A549 (cell line): ENCODE measurements at regions of chr10 and their contacts with region 1.

Region 1: GRCh38 chr10:125060826-125061556 is 99.4 kb downstream of the CTBP2 start:
- DNase-seq: peak; percentile 64
- ATAC-seq: peak; percentile 91
- H3K4me3 ChIP-seq: no peak overlapping the region
- H3K27ac ChIP-seq: peak overlapping the region; percentile 26 to 73; a peak in 4 of 6 replicates
- H3K4me1 ChIP-seq: peaks cover 25% of the 10 kb centered on the region
- CTCF ChIP-seq: peak; percentile 70
- EP300 ChIP-seq: no peak
- POLR2A ChIP-seq: no peak
- RAD21 ChIP-seq: peak; percentile 63 to 64

Region 2: DNA sequence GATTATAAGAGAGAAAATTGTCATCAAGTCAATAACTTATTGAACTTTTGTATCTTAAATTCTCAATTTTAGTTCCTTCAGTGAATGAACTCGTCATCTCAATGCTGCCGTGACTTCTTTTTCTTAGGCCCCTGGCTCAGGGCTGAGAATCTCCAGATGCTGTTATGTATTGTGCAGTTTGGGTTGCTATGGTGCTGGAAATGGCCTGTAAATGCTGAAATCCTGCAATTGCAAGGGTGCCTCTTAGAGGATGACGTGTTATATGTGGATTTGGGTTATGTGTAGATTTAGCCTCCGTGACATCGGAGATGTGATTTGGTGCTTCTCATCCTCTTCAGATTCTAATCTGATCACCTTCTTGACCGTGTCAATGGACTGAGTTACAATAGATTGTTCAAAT is 174.8 kb before region 1 on chr10:
- CTCF ChIA-PET with region 1: no interaction called
- POLR2A ChIA-PET with region 1: no interaction called
- DNase-seq: no peak
- ATAC-seq: peak in 1 of 2 experiments; percentile 62; a peak in 1 of 6 replicates
- H3K4me3 ChIP-seq: no peak overlapping the region
- H3K27ac ChIP-seq: no peak overlapping the region
- H3K4me1 ChIP-seq: no peaks in the 10 kb centered on the region
- CTCF ChIP-seq: no peak
- EP300 ChIP-seq: no peak
- POLR2A ChIP-seq: no peak
- RAD21 ChIP-seq: no peak

Region 3: GRCh38 chr10:124992462-124993344 is 68.3 kb before region 1 on chr10:
- CTCF ChIA-PET with region 1: interaction called, 17 read pairs
- POLR2A ChIA-PET with region 1: no interaction called
- DNase-seq: peak in 1 of 2 experiments; percentile 70
- ATAC-seq: peak; percentile 45 to 82; a peak in 3 of 6 replicates
- H3K4me3 ChIP-seq: no peak overlapping the region
- H3K27ac ChIP-seq: no peak overlapping the region
- H3K4me1 ChIP-seq: no peaks in the 10 kb centered on the region
- CTCF ChIP-seq: peak; percentile 57
- EP300 ChIP-seq: no peak
- POLR2A ChIP-seq: no peak
- RAD21 ChIP-seq: peak; percentile 57 to 58

Region 4: DNA sequence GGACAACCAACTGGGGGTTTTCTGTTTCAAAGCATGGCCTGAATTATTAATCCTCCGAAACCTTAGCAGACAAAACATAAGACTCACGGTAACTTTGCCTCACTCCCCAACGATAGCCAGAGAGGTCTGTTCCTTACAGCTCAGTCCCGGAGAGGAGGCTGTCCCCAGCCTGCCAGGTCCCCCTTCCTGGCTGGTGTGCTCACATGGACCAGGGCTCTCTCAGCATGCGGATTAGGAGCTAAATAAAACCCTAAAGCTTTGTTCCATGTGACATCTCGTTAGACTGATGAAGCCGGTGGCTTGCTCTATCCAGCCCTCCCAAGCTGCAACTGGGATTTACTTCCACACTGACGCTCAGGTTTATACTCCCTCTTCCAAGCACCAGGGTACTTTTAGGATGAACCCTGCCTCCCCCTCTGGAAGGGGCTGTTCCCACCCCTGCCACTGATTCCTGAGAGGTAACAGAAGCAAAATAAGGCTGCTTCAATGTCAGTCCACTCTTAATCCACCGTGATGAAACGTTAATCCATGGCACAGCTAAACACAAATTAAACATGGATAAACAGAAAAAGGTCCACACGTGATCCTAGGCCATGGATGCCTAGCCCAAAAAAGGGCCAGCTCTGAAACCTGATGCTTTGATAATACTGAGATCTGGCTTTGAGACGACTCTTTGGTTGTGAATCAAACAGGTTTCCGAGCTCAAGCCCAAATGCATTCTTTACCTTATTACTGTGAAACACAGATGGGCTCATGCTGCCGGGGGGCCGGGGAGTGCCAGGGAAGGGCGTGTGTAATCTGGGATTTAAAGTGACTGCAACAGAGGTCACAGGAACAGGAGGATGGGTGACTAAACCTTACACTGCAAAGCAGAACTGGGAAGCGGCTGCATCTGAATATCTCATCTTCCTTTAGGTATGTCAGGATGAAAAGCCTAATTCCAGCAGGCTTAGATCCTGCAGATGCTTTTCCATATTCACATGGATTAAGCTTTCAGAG is 32.8 kb before region 1 on chr10:
- CTCF ChIA-PET with region 1: interaction called, 11 read pairs
- POLR2A ChIA-PET with region 1: no interaction called
- DNase-seq: no peak
- ATAC-seq: no peak
- H3K4me3 ChIP-seq: no peak overlapping the region
- H3K27ac ChIP-seq: no peak overlapping the region
- H3K4me1 ChIP-seq: peaks cover 13% of the 10 kb centered on the region
- CTCF ChIP-seq: no peak
- EP300 ChIP-seq: no peak
- POLR2A ChIP-seq: no peak
- RAD21 ChIP-seq: no peak

Region 5: GRCh38 chr10:125076891-125077541 is 16.0 kb after region 1 on chr10:
- CTCF ChIA-PET with region 1: interaction called, 50 read pairs
- POLR2A ChIA-PET with region 1: no interaction called
- DNase-seq: no peak
- ATAC-seq: no peak
- H3K4me3 ChIP-seq: no peak overlapping the region
- H3K27ac ChIP-seq: no peak overlapping the region
- H3K4me1 ChIP-seq: peaks cover 10% of the 10 kb centered on the region; the same call in 2 of the 3 replicates
- CTCF ChIP-seq: no peak
- EP300 ChIP-seq: no peak
- POLR2A ChIP-seq: no peak
- RAD21 ChIP-seq: no peak

Region 6: GRCh38 chr10:125091891-125092290 is 30.9 kb after region 1 on chr10:
- CTCF ChIA-PET with region 1: interaction called, 10 read pairs
- POLR2A ChIA-PET with region 1: no interaction called
- DNase-seq: no peak
- ATAC-seq: no peak
- H3K4me3 ChIP-seq: no peak overlapping the region
- H3K27ac ChIP-seq: no peak overlapping the region
- H3K4me1 ChIP-seq: peaks cover 24% of the 10 kb centered on the region
- CTCF ChIP-seq: no peak
- EP300 ChIP-seq: no peak
- POLR2A ChIP-seq: no peak
- RAD21 ChIP-seq: no peak

Region 7: GRCh38 chr10:125102231-125102630 is 41.2 kb after region 1 on chr10:
- CTCF ChIA-PET with region 1: no interaction called
- POLR2A ChIA-PET with region 1: no interaction called
- DNase-seq: peak in 1 of 2 experiments; percentile 61
- ATAC-seq: peak; percentile 58 to 71
- H3K4me3 ChIP-seq: no peak overlapping the region
- H3K27ac ChIP-seq: peak overlapping the region; percentile 47 to 75; a peak in 5 of 6 replicates
- H3K4me1 ChIP-seq: peaks cover 24% of the 10 kb centered on the region
- CTCF ChIP-seq: no peak
- EP300 ChIP-seq: no peak
- POLR2A ChIP-seq: no peak
- RAD21 ChIP-seq: no peak

Region 8: DNA sequence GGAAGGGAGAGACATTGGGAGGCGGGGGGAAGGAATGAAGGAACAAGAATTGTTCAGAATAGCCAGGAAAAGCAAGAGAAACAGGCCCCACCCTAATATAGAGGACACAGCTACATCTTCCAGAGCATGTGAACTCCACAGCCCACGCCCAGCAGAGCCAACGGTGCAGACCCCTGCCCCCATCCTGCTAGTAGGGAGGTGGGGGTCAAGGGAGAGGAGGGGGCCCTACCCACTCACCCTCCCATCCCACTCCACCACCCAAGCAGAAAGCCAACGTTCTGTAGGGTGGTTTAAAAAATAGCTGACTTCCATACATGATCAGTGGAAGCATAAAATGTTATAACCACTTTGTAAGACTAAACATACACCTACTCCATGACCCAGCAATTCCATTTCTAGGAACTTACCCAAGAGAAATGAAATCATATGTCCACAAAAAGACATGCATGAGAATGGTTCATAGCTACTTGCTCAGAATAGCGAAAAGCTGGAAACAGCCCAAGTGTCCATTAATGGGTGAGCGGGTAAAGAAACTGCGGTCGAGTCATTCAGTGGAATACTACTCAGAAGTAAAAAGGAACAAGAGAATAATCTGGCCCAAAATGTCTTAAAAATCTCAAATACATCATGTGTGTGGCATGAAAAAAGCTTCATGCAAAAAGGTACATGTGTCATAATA is 67.5 kb after region 1 on chr10:
- CTCF ChIA-PET with region 1: interaction called, 10 read pairs
- POLR2A ChIA-PET with region 1: no interaction called
- DNase-seq: no peak
- ATAC-seq: no peak
- H3K4me3 ChIP-seq: no peak overlapping the region
- H3K27ac ChIP-seq: peak overlapping the region in 1 of 2 experiments; percentile 10; a peak in 2 of 6 replicates
- H3K4me1 ChIP-seq: peaks cover 47% of the 10 kb centered on the region
- CTCF ChIP-seq: no peak
- EP300 ChIP-seq: no peak
- POLR2A ChIP-seq: no peak
- RAD21 ChIP-seq: no peak

Region 9: DNA sequence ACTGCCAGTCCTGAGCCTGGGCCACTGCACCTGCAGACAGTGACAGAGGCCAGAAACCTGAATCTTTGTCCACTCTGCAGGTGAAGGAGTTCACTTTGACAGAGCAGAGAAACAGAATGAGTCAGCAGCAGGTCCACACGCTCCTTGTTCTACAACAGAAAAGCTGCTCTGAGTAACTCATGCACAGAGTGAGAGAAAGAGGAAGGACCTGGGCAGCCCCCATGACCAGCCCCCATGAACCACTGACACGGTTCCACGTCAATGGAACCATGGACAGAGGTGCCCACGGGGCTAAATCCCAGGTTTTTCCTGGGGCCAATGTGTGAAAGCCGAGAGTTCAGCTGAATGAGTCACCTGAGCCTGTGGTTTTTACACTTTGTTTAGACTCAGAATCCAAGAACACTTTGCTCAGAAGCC is 140.1 kb after region 1 on chr10:
- CTCF ChIA-PET with region 1: no interaction called
- POLR2A ChIA-PET with region 1: no interaction called
- DNase-seq: peak; percentile 19 to 25
- ATAC-seq: peak; percentile 68 to 71
- H3K4me3 ChIP-seq: no peak overlapping the region
- H3K27ac ChIP-seq: peak overlapping the region in 1 of 2 experiments; percentile 61; a peak in 3 of 6 replicates
- H3K4me1 ChIP-seq: peaks cover 12% of the 10 kb centered on the region; the same call in 2 of the 3 replicates
- CTCF ChIP-seq: no peak
- EP300 ChIP-seq: no peak
- POLR2A ChIP-seq: no peak
- RAD21 ChIP-seq: no peak